ENCODE measurements at regions of chr13 and their contacts with region 1.

Region 1: GRCh38 chr13:53839461-53839860 is 810.8 kb downstream of the OLFM4 start:
- DNase-seq: no peak
- H3K4me3 ChIP-seq: no peak overlapping the region
- H3K27ac ChIP-seq: no peak overlapping the region
- H3K4me1 ChIP-seq: no peaks in the 10 kb centered on the region
- H3K27me3 ChIP-seq: no peaks in the 10 kb centered on the region
- CTCF ChIP-seq: no peak
- POLR2A ChIP-seq: no peak

Region 2: GRCh38 chr13:53126841-53127245 is 712.6 kb before region 1 on chr13:
- intact Hi-C with region 1: no loop called
- DNase-seq: no peak
- H3K4me3 ChIP-seq: no peak overlapping the region
- H3K27ac ChIP-seq: peak overlapping the region; percentile 45
- H3K4me1 ChIP-seq: peaks cover 5% of the 10 kb centered on the region
- H3K27me3 ChIP-seq: no peaks in the 10 kb centered on the region
- CTCF ChIP-seq: no peak
- POLR2A ChIP-seq: no peak

Region 3: GRCh38 chr13:54092686-54093085 is 253.2 kb after region 1 on chr13:
- intact Hi-C with region 1: no loop called
- DNase-seq: no peak
- H3K4me3 ChIP-seq: no peak overlapping the region
- H3K27ac ChIP-seq: no peak overlapping the region
- H3K4me1 ChIP-seq: no peaks in the 10 kb centered on the region
- H3K27me3 ChIP-seq: no peaks in the 10 kb centered on the region
- CTCF ChIP-seq: no peak
- POLR2A ChIP-seq: no peak

Region 4: GRCh38 chr13:55029280-55029679 is 1189.8 kb after region 1 on chr13:
- intact Hi-C with region 1: loop called (anchors 5 kb)
- DNase-seq: no peak
- H3K4me3 ChIP-seq: no peak overlapping the region
- H3K27ac ChIP-seq: no peak overlapping the region
- H3K4me1 ChIP-seq: no peaks in the 10 kb centered on the region
- H3K27me3 ChIP-seq: no peaks in the 10 kb centered on the region
- CTCF ChIP-seq: no peak
- POLR2A ChIP-seq: no peak

Measured in vagina (tissue), 2 donors.